ENCODE measurements at regions of chr14 and their contacts with region 1.

Region 1: GRCh38 chr14:65412032-65412846 is at the start of gene FUT8:
- DNase-seq: peak; percentile 96
- H3K4me3 ChIP-seq: peak within 1 kb of the TSS; percentile 69 to 98 (median 97)
- H3K27ac ChIP-seq: peak within 1 kb of the TSS; percentile 81
- H3K4me1 ChIP-seq: peaks cover 16% of the 10 kb centered on the region
- H3K27me3 ChIP-seq: no peaks in the 10 kb centered on the region
- CTCF ChIP-seq: peak; percentile 46 to 88
- total RNA-seq, gene FUT8: 14.4 to 22.0 TPM

Region 2: DNA sequence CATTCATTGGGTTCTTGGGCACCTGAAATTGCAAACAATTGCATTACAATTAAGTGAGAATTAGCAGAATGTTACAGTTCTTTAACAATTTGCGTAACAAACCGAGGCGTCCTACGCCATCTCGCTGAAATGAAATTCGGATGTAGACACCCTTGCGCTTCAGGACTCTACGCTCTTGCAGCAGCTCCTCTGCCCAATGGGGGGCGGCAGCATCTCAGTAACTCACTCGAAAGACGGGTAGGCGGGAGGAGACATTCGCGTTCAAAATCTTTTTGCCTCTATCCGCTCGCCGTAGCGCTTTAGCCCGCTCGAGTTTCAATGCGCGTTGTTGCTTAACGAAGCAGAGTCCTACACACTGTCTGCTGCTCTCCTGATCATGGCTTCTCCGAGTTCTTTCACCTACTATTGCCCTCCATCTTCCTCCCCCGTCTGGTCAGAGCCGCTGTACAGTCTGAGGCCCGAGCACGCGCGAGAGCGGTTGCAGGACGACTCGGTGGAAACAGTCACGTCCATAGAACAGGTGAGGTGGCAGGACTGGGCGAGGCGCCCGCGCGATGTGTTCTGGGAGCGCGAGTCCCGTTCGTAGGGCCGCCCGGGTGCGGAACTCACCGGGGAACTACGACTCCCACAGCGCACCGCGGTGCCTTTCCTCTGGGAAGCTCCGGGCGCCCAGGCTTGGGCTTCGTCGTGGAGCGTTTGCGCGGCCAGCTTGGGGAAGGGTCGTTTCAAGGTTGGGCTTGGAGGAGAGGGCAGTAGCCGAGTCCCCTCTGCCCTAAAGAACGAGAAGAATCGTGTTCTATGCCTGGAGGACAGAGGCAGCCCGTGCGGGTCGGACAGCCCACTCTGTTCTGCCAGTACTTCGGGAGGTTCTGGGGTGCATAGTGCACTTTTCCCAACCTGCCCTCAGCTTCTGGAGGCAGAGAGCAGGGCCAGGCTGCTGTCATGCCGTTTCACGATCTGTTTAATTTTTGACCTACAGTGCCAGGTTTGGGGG is 425.4 kb before region 1 on chr14 and contains the start of gene FNTB:
- CTCF ChIA-PET with region 1: no interaction called
- dilution Hi-C with region 1: no loop called
- in situ Hi-C with region 1: no loop called
- intact Hi-C with region 1: loop called (anchors 2 kb)
- DNase-seq: peak; percentile 95
- H3K4me3 ChIP-seq: peak within 1 kb of the TSS; percentile 79 to 86 (median 83)
- H3K27ac ChIP-seq: peak within 1 kb of the TSS; percentile 61
- H3K4me1 ChIP-seq: peaks cover 6% of the 10 kb centered on the region
- H3K27me3 ChIP-seq: no peaks in the 10 kb centered on the region
- CTCF ChIP-seq: peak; percentile 95 to 97
- total RNA-seq, gene FNTB: 11.7 to 12.5 TPM

Region 3: DNA sequence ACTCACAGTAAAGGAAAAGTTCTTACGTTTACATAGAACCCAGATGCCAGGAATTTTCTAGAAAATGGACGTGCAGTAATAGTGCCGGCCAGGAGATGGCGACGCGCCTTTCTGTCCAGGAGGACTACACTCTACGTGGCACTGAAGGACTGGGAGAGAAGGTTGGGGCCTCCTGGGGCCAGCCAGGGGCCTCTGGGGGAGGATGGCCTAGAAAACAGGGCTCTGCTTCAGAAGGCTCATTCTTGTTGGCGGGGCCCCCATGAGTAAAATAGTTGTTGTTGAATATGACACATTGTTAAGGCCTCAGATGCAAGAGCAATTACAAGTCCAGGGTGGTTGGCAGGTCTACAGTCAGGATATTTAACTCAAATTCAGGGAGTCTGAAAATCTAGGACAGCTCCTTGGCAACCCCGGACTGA is 189.8 kb before region 1 on chr14:
- CTCF ChIA-PET with region 1: interaction called, 6 read pairs
- dilution Hi-C with region 1: no loop called
- in situ Hi-C with region 1: no loop called
- intact Hi-C with region 1: loop called (anchors 1 kb)
- DNase-seq: peak; percentile 46
- H3K4me3 ChIP-seq: no peak overlapping the region
- H3K27ac ChIP-seq: no peak overlapping the region
- H3K4me1 ChIP-seq: peaks cover 11% of the 10 kb centered on the region
- H3K27me3 ChIP-seq: no peaks in the 10 kb centered on the region
- CTCF ChIP-seq: peak; percentile 90 to 92

Region 4: GRCh38 chr14:65496178-65496993 is 84.1 kb after region 1 on chr14:
- CTCF ChIA-PET with region 1: no interaction called
- dilution Hi-C with region 1: no loop called
- in situ Hi-C with region 1: no loop called
- intact Hi-C with region 1: loop called (anchors 5 kb)
- DNase-seq: peak; percentile 48
- H3K4me3 ChIP-seq: no peak overlapping the region
- H3K27ac ChIP-seq: no peak overlapping the region
- H3K4me1 ChIP-seq: no peaks in the 10 kb centered on the region
- H3K27me3 ChIP-seq: no peaks in the 10 kb centered on the region
- CTCF ChIP-seq: no peak

Region 5: GRCh38 chr14:65824285-65824977 is 412.2 kb after region 1 on chr14:
- CTCF ChIA-PET with region 1: interaction called, 50 read pairs
- dilution Hi-C with region 1: no loop called
- in situ Hi-C with region 1: no loop called
- intact Hi-C with region 1: loop called (anchors 1 kb)
- DNase-seq: peak; percentile 42
- H3K4me3 ChIP-seq: no peak overlapping the region
- H3K27ac ChIP-seq: no peak overlapping the region
- H3K4me1 ChIP-seq: no peaks in the 10 kb centered on the region
- H3K27me3 ChIP-seq: peaks cover 7% of the 10 kb centered on the region
- CTCF ChIP-seq: peak; percentile 91 to 98

Region 6: GRCh38 chr14:66070509-66071319 is 658.5 kb after region 1 on chr14:
- CTCF ChIA-PET with region 1: no interaction called
- dilution Hi-C with region 1: no loop called
- in situ Hi-C with region 1: no loop called
- intact Hi-C with region 1: loop called (anchors 2 kb)
- DNase-seq: peak; percentile 31
- H3K4me3 ChIP-seq: no peak overlapping the region
- H3K27ac ChIP-seq: no peak overlapping the region
- H3K4me1 ChIP-seq: peaks cover 16% of the 10 kb centered on the region
- H3K27me3 ChIP-seq: no peaks in the 10 kb centered on the region
- CTCF ChIP-seq: peak; percentile 72 to 83